ENCODE measurements at regions of chr10 and their contacts with region 1.

Region 1: GRCh38 chr10:31994926-31995325 is 61.3 kb downstream of the KIF5B start:
- DNase-seq: no peak
- ATAC-seq: no peak
- H3K4me3 Mint-ChIP-seq: no peak overlapping the region
- H3K27ac Mint-ChIP-seq: no peak overlapping the region
- H3K4me1 Mint-ChIP-seq: no peaks in the 10 kb centered on the region
- H3K27me3 Mint-ChIP-seq: no peaks in the 10 kb centered on the region
- CTCF ChIP-seq: no peak

Region 2: GRCh38 chr10:31928549-31929260 is 66.2 kb before region 1 on chr10 and contains the start of gene ARHGAP12:
- CTCF ChIA-PET with region 1: no interaction called
- POLR2A ChIA-PET with region 1: no interaction called
- intact Hi-C with region 1: no loop called
- DNase-seq: peak; percentile 97
- ATAC-seq: peak; percentile 74
- H3K4me3 Mint-ChIP-seq: peak within 1 kb of the TSS; percentile 91
- H3K27ac Mint-ChIP-seq: peak within 1 kb of the TSS; percentile 88
- H3K4me1 Mint-ChIP-seq: peaks cover 44% of the 10 kb centered on the region
- H3K27me3 Mint-ChIP-seq: no peaks in the 10 kb centered on the region
- CTCF ChIP-seq: no peak
- total RNA-seq, gene ARHGAP12: 23.2 and 27.3 TPM in 2 replicates

Region 3: GRCh38 chr10:31959461-31960173 is 35.3 kb before region 1 on chr10:
- CTCF ChIA-PET with region 1: interaction called, 4 read pairs
- POLR2A ChIA-PET with region 1: no interaction called
- intact Hi-C with region 1: loop called (anchors 5 kb)
- DNase-seq: no peak
- ATAC-seq: no peak
- H3K4me3 Mint-ChIP-seq: no peak overlapping the region
- H3K27ac Mint-ChIP-seq: no peak overlapping the region
- H3K4me1 Mint-ChIP-seq: peaks cover 12% of the 10 kb centered on the region
- H3K27me3 Mint-ChIP-seq: no peaks in the 10 kb centered on the region
- CTCF ChIP-seq: no peak

Region 4: DNA sequence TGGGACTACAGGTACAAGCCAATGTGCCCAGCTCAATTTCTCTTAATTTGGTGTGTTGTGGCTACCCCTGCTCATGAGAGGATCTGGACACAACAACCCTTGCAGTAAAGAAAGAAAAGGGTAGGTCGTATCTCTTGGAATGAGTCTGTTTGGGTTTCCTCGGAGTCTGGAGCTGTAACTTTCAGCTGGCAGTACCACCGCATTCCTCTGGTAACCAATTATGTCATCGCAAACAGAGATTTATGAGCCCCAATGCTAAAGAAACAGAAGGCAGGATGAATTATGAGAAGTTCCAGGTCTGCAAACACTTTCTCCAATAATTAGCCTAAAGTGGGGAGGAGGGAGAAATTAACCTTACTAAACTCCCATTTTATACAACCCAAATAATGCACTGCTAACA is 1526.1 kb after region 1 on chr10:
- CTCF ChIA-PET with region 1: no interaction called
- POLR2A ChIA-PET with region 1: no interaction called
- intact Hi-C with region 1: no loop called
- DNase-seq: no peak
- ATAC-seq: no peak
- H3K4me3 Mint-ChIP-seq: no peak overlapping the region
- H3K27ac Mint-ChIP-seq: no peak overlapping the region
- H3K4me1 Mint-ChIP-seq: no peaks in the 10 kb centered on the region
- H3K27me3 Mint-ChIP-seq: no peaks in the 10 kb centered on the region
- CTCF ChIP-seq: no peak

Measured in activated B cell treated with CpG ODN at 0.5 μM for 24 hours (primary cell).